ENCODE measurements at regions of chr14 and their contacts with region 1.

Region 1: GRCh38 chr14:95534299-95535225 is at the start of gene GLRX5:
- DNase-seq: peak; percentile 94 to 100 (median 96)
- ATAC-seq: peak; percentile 86
- H3K4me3 ChIP-seq: peak within 1 kb of the TSS; percentile 73
- H3K4me3 Mint-ChIP-seq: peak within 1 kb of the TSS; percentile 96
- H3K27ac ChIP-seq: peak within 1 kb of the TSS; percentile 78 to 85
- H3K27ac Mint-ChIP-seq: peak within 1 kb of the TSS; percentile 85
- H3K4me1 ChIP-seq: peaks cover 37% of the 10 kb centered on the region
- H3K4me1 Mint-ChIP-seq: peaks cover 73% of the 10 kb centered on the region
- H3K27me3 ChIP-seq: no peaks in the 10 kb centered on the region
- H3K27me3 Mint-ChIP-seq: no peaks in the 10 kb centered on the region
- CTCF ChIP-seq: no peak
- total RNA-seq, gene GLRX5: 11.3 to 11.9 TPM

Region 2: GRCh38 chr14:95319312-95320021 is 215.1 kb before region 1 on chr14 and contains the start of gene CLMN:
- CTCF ChIA-PET with region 1: no interaction called
- POLR2A ChIA-PET with region 1: no interaction called
- intact Hi-C with region 1: loop called in 1 of 2 experiments (anchors 10 kb)
- DNase-seq: peak in 13 of 14 experiments; percentile 3 to 72 (median 28)
- ATAC-seq: peak; percentile 66
- H3K4me3 ChIP-seq: peak within 1 kb of the TSS; percentile 58
- H3K4me3 Mint-ChIP-seq: peak within 1 kb of the TSS; percentile 76
- H3K27ac ChIP-seq: no peak within 1 kb of the TSS
- H3K27ac Mint-ChIP-seq: no peak within 1 kb of the TSS
- H3K4me1 ChIP-seq: peaks cover 19% of the 10 kb centered on the region
- H3K4me1 Mint-ChIP-seq: peaks cover 15% of the 10 kb centered on the region
- H3K27me3 ChIP-seq: peaks cover 8 to 15% of the 10 kb centered on the region in 2 experiments
- H3K27me3 Mint-ChIP-seq: peaks cover 38% of the 10 kb centered on the region
- CTCF ChIP-seq: no peak
- total RNA-seq, gene CLMN: 0.27 to 0.67 TPM

Region 3: DNA sequence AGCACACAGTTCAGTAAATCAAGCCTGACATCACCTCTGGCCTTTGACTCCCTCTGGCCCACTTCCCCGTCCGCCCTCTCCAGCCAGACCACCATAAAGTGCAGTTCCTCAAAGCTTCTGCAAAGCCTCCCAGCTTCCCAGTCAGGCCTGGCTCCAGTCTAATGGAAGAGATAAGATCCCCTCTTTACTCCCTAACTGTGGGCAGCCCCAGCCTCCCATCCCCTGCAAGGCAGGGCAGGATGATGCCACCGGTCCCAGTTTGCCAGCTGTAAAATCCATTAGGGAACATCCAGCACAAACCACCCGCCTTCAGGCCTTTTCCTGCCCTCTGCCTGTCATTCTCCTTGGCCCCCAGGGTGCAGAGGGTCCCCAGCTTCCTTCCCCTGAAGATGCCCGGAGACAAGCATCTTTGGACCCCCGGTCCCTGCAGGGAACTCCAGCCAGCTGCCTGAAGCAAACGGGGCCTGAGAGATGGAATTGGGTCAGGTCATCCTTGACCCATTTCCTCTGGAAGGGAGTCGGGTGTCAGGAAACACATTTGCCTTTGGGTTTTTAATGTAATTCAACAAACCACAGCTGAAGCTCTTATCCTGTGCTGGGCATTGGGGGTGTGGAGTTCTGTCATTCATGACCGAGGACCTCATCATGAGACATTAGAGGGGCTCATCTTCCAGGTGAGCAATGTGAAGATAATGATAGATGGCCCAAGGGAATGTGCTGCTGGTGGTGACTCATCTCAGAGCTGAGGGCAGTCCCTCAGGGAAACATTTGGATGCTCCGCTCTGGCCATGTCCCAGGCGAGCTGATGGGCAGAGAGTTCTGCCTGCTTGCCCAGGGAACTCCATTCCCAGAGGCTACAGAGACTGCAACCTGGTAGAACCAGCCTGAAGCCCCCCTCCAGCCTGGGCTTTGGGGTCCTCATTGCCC is 121.0 kb before region 1 on chr14:
- CTCF ChIA-PET with region 1: no interaction called
- POLR2A ChIA-PET with region 1: no interaction called
- intact Hi-C with region 1: no loop called
- DNase-seq: no peak
- ATAC-seq: no peak
- H3K4me3 ChIP-seq: no peak overlapping the region
- H3K4me3 Mint-ChIP-seq: no peak overlapping the region
- H3K27ac ChIP-seq: no peak overlapping the region
- H3K27ac Mint-ChIP-seq: no peak overlapping the region
- H3K4me1 ChIP-seq: no peaks in the 10 kb centered on the region
- H3K4me1 Mint-ChIP-seq: no peaks in the 10 kb centered on the region
- H3K27me3 ChIP-seq: no peaks in the 10 kb centered on the region
- H3K27me3 Mint-ChIP-seq: no peaks in the 10 kb centered on the region
- CTCF ChIP-seq: no peak

Region 4: GRCh38 chr14:95662376-95663186 is 128.0 kb after region 1 on chr14:
- CTCF ChIA-PET with region 1: no interaction called
- POLR2A ChIA-PET with region 1: no interaction called
- intact Hi-C with region 1: no loop called
- DNase-seq: no peak
- ATAC-seq: no peak
- H3K4me3 ChIP-seq: no peak overlapping the region
- H3K4me3 Mint-ChIP-seq: no peak overlapping the region
- H3K27ac ChIP-seq: no peak overlapping the region
- H3K27ac Mint-ChIP-seq: no peak overlapping the region
- H3K4me1 ChIP-seq: no peaks in the 10 kb centered on the region
- H3K4me1 Mint-ChIP-seq: no peaks in the 10 kb centered on the region
- H3K27me3 ChIP-seq: peaks cover 0 to 14% of the 10 kb centered on the region in 2 experiments
- H3K27me3 Mint-ChIP-seq: peaks cover 37% of the 10 kb centered on the region
- CTCF ChIP-seq: no peak

Region 5: DNA sequence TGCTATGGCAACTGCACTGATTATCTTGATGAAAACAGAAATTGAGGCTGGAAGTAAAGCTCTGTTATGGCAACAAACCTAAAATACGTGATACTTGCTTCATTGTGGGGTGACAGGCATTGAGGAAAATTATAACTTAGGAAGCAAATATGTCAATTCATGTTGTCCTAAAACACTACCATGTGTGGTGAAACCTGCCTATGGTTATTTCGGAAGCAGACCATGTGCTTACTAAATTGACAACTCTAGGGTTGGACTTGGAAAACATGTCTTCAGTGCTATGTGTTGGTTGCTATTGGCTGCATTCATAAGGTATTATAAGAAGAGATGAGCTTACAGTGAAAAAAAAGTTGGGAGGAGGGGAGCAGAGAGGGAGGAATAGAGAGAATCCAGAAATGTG is 449.6 kb after region 1 on chr14:
- CTCF ChIA-PET with region 1: no interaction called
- POLR2A ChIA-PET with region 1: no interaction called
- intact Hi-C with region 1: no loop called
- DNase-seq: no peak
- ATAC-seq: no peak
- H3K4me3 ChIP-seq: no peak overlapping the region
- H3K4me3 Mint-ChIP-seq: no peak overlapping the region
- H3K27ac ChIP-seq: no peak overlapping the region
- H3K27ac Mint-ChIP-seq: no peak overlapping the region
- H3K4me1 ChIP-seq: no peaks in the 10 kb centered on the region
- H3K4me1 Mint-ChIP-seq: no peaks in the 10 kb centered on the region
- H3K27me3 ChIP-seq: peaks cover 19 to 27% of the 10 kb centered on the region in 2 experiments
- H3K27me3 Mint-ChIP-seq: peaks cover 47% of the 10 kb centered on the region
- CTCF ChIP-seq: no peak